ENCODE measurements at regions of chr2 and their contacts with region 1.

Region 1: GRCh38 chr2:76187415-76187814 is 476.7 kb upstream of the GCFC2 start:
- DNase-seq: no peak
- ATAC-seq: no peak
- H3K4me3 ChIP-seq: no peak overlapping the region
- H3K27ac ChIP-seq: no peak overlapping the region
- H3K4me1 ChIP-seq: no peaks in the 10 kb centered on the region
- H3K27me3 ChIP-seq: no peaks in the 10 kb centered on the region
- CTCF ChIP-seq: no peak
- POLR2A ChIP-seq: no peak

Region 2: DNA sequence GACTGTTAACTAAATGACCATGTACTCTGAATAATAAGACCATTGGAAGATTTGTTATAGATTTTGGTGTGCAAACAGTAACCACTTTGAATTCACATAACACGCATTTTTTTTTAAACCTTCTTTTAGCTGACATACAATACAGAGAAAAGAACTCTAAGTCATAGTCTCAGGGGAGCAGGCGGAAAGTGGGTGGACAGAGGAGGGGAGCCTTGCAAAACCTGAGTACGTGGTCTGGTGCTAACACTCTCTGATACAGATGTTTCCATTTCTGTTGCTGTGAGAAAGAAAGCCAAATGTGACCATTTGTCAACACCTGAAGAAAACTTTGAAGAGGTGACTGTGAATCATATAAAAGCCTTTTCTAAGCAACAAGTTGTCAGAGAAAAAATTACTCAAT is 324.9 kb before region 1 on chr2:
- intact Hi-C with region 1: no loop called
- DNase-seq: no peak
- ATAC-seq: no peak
- H3K4me3 ChIP-seq: no peak overlapping the region
- H3K27ac ChIP-seq: no peak overlapping the region
- H3K4me1 ChIP-seq: no peaks in the 10 kb centered on the region
- H3K27me3 ChIP-seq: no peaks in the 10 kb centered on the region
- CTCF ChIP-seq: no peak
- POLR2A ChIP-seq: no peak

Region 3: DNA sequence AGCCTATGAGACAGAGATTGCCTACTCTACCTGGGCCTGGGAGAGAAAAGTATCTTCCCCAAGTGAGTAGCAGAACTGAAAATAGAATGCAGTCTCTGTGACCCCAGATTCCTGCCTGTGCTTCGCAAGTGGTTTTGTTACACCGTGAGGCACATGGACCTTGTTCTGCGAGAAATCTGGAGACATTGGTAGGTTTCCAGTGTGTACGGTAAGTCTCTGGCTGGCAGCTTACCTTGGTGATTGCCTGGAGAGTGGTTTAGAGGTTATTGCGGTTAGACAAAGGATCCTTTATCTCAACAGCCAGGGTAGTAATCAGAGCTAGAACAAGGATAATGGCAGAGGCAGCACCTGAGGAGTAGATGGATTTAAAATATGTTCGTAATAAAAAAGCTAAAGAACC is 129.3 kb after region 1 on chr2:
- intact Hi-C with region 1: no loop called
- DNase-seq: no peak
- ATAC-seq: no peak
- H3K4me3 ChIP-seq: no peak overlapping the region
- H3K27ac ChIP-seq: no peak overlapping the region
- H3K4me1 ChIP-seq: no peaks in the 10 kb centered on the region
- H3K27me3 ChIP-seq: no peaks in the 10 kb centered on the region
- CTCF ChIP-seq: no peak
- POLR2A ChIP-seq: no peak

Region 4: DNA sequence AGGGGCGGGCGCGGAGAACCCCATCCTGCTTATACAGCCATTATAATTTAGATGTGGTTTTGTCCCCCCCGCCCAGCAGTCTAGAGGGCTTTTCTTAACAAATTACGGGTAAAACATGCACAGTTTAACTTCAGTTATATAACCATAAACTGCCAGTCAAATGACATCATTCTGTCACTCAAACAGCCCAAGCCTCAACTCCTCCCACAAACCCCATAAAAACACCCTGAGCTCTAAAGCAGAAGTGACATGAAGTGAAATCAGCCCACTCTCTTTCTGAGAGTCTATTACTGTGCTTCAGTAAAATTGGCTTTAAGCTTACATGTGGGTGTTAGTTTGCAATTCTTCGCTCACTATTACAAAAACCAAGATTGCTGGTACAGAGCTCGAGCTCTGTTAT is 228.4 kb after region 1 on chr2:
- intact Hi-C with region 1: no loop called
- DNase-seq: no peak
- ATAC-seq: no peak
- H3K4me3 ChIP-seq: no peak overlapping the region
- H3K27ac ChIP-seq: no peak overlapping the region
- H3K4me1 ChIP-seq: no peaks in the 10 kb centered on the region
- H3K27me3 ChIP-seq: no peaks in the 10 kb centered on the region
- CTCF ChIP-seq: no peak
- POLR2A ChIP-seq: no peak

Region 5: GRCh38 chr2:76613330-76613729 is 425.9 kb after region 1 on chr2:
- intact Hi-C with region 1: loop called (anchors 5 kb)
- DNase-seq: no peak
- ATAC-seq: no peak
- H3K4me3 ChIP-seq: no peak overlapping the region
- H3K27ac ChIP-seq: no peak overlapping the region
- H3K4me1 ChIP-seq: no peaks in the 10 kb centered on the region
- H3K27me3 ChIP-seq: no peaks in the 10 kb centered on the region
- CTCF ChIP-seq: no peak
- POLR2A ChIP-seq: no peak

Measured in body of pancreas (tissue), 4 donors.